Left cardiac atrium (tissue), 4 donors: ENCODE measurements at regions of chr11 and their contacts with region 1.

Region 1: GRCh38 chr11:111766093-111766833 is at the start of gene PPP2R1B:
- DNase-seq: peak; percentile 78
- ATAC-seq: peak; percentile 98 to 99
- total RNA-seq, gene PPP2R1B: 30.3 to 37.2 TPM

Region 2: DNA sequence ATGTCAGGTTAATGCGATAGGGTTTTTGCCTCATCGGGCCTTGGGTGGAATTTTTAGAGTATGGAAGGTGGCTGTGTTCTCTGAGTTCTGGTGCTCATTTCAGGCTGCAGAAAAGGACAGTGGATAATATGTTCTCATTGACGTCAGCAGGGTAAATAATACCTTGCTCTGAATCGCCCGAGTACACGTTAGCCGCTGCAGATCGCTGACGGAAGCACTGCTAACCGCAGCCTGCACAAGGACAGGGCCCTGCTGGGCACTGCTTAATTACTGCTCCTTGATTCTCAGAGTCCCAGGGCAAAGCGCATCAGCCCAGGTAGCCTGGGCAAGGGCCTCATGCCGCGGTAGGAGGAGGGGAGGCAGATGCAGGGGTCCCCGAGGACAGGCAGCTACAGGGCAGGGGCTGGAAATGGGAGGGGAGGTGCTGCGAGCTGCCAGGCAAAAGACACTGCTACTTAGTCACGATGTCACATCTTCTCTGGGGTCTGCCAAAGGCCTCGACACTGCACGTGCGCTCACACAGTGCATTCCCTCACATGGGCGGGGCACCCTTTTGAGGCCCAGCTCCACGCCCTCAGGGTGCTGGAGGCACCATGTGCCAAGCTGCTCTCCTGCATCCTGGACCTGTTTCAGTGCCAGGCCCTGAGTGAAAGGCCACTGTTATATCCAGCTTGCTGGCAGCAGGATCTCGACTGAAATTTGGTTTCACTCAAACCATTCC is 35.2 kb before region 1 on chr11:
- intact Hi-C with region 1: loop called in 1 of 2 experiments (anchors 5 kb)
- DNase-seq: peak; percentile 74
- ATAC-seq: peak; percentile 21 to 25